Sigmoid colon (tissue), 7 donors: ENCODE measurements at regions of chr10 and their contacts with region 1.

Region 1: DNA sequence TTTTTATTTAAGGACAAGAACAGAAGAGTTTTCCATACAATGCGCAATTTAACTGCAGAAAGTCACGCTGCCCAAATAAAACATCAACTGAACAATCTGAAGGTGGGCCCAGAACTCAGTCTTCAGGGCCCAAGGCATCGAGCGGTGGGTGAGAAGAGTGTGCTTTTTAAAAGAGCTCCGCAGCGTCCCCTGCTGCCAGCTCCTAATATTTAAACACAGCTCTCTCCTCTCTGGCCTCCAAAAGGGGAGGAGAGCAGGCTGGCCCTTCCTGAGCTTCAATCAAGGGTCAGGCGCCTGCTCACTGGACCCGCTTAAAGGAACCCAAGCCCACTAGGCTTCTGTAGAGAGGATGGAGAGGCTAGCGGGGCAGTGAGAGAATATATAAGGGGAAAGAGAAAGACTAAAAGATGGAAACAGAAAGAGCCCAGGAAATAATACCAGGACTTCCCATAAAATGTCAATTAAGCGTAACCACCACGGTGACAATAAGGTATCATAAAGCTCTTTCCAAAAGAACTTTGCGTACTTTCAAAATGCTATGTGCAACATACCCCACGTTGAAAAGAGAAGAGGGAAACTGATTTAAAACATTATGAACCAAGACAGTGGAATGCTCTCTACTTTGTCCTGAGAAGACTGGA is 2.8 kb downstream of the FAM53B start:
- DNase-seq: peak; percentile 92
- H3K4me3 ChIP-seq: peak overlapping the region in 2 of 4 donors; percentile 82
- H3K27ac ChIP-seq: peak overlapping the region; percentile 86 to 94 (median 89)
- H3K4me1 ChIP-seq: peaks cover 0 to 82% (median 76%) of the 10 kb centered on the region in 4 donors
- H3K27me3 ChIP-seq: no peaks in the 10 kb centered on the region
- CTCF ChIP-seq: peak; percentile 84 to 96 (median 90)
- EP300 ChIP-seq: no peak
- POLR2A ChIP-seq: no peak

Region 2: DNA sequence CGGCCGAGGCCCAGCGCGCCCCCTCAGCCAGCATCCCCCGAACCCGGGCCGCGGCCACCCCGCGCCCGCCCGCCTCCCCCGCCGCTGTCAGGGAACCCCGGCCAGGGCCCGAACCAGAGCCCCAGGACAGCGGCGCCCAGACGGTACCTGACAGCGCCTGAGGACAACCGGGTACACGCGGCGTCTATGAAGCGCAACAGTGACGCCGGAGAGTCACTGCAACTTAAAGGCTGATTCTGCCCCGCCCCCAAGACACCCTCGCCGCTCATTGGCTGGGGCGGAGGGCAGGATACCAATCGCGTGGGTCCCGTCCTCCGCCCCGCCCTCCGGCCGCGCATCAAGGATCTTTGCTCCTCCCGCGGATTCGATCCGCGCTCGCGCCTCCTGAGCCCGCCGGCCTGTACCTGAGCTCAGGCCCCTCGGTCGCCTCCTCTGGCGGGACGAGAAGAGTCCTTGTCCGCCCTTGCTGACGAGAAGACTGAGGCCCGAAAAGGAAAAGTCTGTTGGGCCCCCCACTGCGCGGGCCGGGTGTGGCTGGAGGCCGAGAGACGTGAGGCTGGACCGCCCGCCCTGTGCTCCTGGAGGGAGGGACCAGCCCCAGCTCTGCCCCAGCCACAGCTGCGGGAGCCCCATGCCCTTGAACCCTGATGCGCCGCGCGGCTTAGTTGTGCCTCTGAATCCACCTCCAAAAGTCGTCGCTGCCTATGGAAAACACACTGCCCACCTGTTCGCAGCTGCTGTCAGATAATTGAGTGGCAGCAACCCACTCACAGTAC is 322.5 kb before region 1 on chr10 and contains the start of gene OAT:
- intact Hi-C with region 1: loop called (anchors 5 kb)
- DNase-seq: peak; percentile 99
- H3K4me3 ChIP-seq: peak within 1 kb of the TSS; percentile 87 to 100 (median 100)
- H3K27ac ChIP-seq: peak within 1 kb of the TSS; percentile 98 to 100 (median 100)
- H3K4me1 ChIP-seq: peaks cover 0 to 45% (median 40%) of the 10 kb centered on the region in 4 donors
- H3K27me3 ChIP-seq: no peaks in the 10 kb centered on the region
- CTCF ChIP-seq: no peak
- EP300 ChIP-seq: no peak
- POLR2A ChIP-seq: peak; percentile 94 to 98
- total RNA-seq, gene OAT: 117 to 147 (median 131) TPM

Region 3: GRCh38 chr10:124539935-124540641 is 201.3 kb before region 1 on chr10:
- intact Hi-C with region 1: loop called (anchors 1 kb)
- DNase-seq: peak; percentile 84
- H3K4me3 ChIP-seq: no peak overlapping the region
- H3K27ac ChIP-seq: no peak overlapping the region
- H3K4me1 ChIP-seq: peaks cover 0 to 8% (median 6%) of the 10 kb centered on the region in 4 donors
- H3K27me3 ChIP-seq: no peaks in the 10 kb centered on the region
- CTCF ChIP-seq: peak; percentile 77 to 91 (median 86)
- EP300 ChIP-seq: no peak
- POLR2A ChIP-seq: no peak

Region 4: GRCh38 chr10:124641282-124642087 is 99.9 kb before region 1 on chr10:
- intact Hi-C with region 1: loop called (anchors 2 kb)
- DNase-seq: peak; percentile 90
- H3K4me3 ChIP-seq: no peak overlapping the region
- H3K27ac ChIP-seq: peak overlapping the region; percentile 54 to 81 (median 70)
- H3K4me1 ChIP-seq: peaks cover 0 to 71% (median 54%) of the 10 kb centered on the region in 4 donors
- H3K27me3 ChIP-seq: no peaks in the 10 kb centered on the region
- CTCF ChIP-seq: no peak
- EP300 ChIP-seq: no peak
- POLR2A ChIP-seq: no peak

Region 5: GRCh38 chr10:124701435-124701834 is 40.0 kb before region 1 on chr10:
- intact Hi-C with region 1: loop called (anchors 5 kb)
- DNase-seq: peak; percentile 95
- H3K4me3 ChIP-seq: no peak overlapping the region
- H3K27ac ChIP-seq: peak overlapping the region; percentile 66 to 81 (median 72)
- H3K4me1 ChIP-seq: peaks cover 0 to 96% (median 83%) of the 10 kb centered on the region in 4 donors
- H3K27me3 ChIP-seq: no peaks in the 10 kb centered on the region
- CTCF ChIP-seq: no peak
- EP300 ChIP-seq: peak in 1 of 4 donors; percentile 13
- POLR2A ChIP-seq: no peak

Region 6: GRCh38 chr10:124916585-124917427 is 175.4 kb after region 1 on chr10:
- intact Hi-C with region 1: loop called (anchors 10 kb)
- DNase-seq: peak; percentile 99
- H3K4me3 ChIP-seq: peak overlapping the region; percentile 72 to 94 (median 87)
- H3K27ac ChIP-seq: peak overlapping the region; percentile 93 to 100 (median 96)
- H3K4me1 ChIP-seq: peaks cover 0 to 52% (median 45%) of the 10 kb centered on the region in 4 donors
- H3K27me3 ChIP-seq: no peaks in the 10 kb centered on the region
- CTCF ChIP-seq: no peak
- EP300 ChIP-seq: peak in 1 of 4 donors; percentile 42
- POLR2A ChIP-seq: peak; percentile 69 to 78